ENCODE measurements at regions of chr3 and their contacts with region 1.

Region 1: DNA sequence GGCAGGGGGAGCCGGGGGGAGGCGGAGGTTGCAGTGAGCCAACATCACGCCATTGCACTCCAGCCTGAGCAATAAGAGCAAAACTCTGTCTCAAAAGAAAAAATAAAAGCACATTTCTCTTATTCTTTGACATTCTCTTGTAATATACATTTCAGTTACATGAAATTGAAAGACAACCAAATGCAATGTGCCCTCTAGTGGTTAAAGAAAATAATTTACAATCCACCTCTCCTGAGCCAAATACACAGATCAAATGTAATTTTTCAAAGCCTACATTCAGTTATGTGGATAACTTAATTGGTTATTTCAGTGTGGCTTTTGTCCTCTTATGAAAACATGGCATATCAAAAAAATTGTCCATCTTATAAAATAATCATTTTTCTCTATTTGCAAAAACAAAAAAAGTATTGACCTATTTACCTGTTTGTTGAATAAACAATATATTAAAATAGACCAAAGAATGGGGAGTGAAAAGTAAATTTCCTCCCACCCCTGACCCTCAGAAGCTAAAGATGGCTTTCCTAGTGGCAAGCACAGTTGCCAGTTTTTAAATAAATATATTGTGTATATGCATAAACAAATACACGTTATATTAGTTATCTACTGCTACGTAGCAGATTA is 14.2 kb upstream of the U2SURP start:
- DNase-seq: no peak
- ATAC-seq: peak; percentile 69 to 79 (median 76)
- H3K4me3 ChIP-seq: no peak overlapping the region
- H3K27ac ChIP-seq: no peak overlapping the region
- H3K4me1 ChIP-seq: peaks cover 0 to 5% (median 0%) of the 10 kb centered on the region in 4 donors
- H3K27me3 ChIP-seq: no peaks in the 10 kb centered on the region
- CTCF ChIP-seq: peak; percentile 67 to 77 (median 73)
- POLR2A ChIP-seq: no peak

Region 2: GRCh38 chr3:142931222-142931621 is 56.0 kb before region 1 on chr3:
- intact Hi-C with region 1: loop called in 1 of 2 experiments (anchors 10 kb)
- DNase-seq: no peak
- ATAC-seq: no peak
- H3K4me3 ChIP-seq: no peak overlapping the region
- H3K27ac ChIP-seq: no peak overlapping the region
- H3K4me1 ChIP-seq: peaks cover 0 to 32% (median 5%) of the 10 kb centered on the region in 4 donors
- H3K27me3 ChIP-seq: no peaks in the 10 kb centered on the region
- CTCF ChIP-seq: no peak
- POLR2A ChIP-seq: no peak

Region 3: GRCh38 chr3:143103652-143104051 is 116.5 kb after region 1 on chr3:
- intact Hi-C with region 1: no loop called
- DNase-seq: no peak
- ATAC-seq: no peak
- H3K4me3 ChIP-seq: no peak overlapping the region
- H3K27ac ChIP-seq: no peak overlapping the region
- H3K4me1 ChIP-seq: no peaks in the 10 kb centered on the region
- H3K27me3 ChIP-seq: no peaks in the 10 kb centered on the region
- CTCF ChIP-seq: no peak
- POLR2A ChIP-seq: no peak

Measured in right lobe of liver (tissue), 6 donors.